Mammary epithelial cell (primary cell): ENCODE measurements at regions of chr9 and their contacts with region 1.

Region 1: DNA sequence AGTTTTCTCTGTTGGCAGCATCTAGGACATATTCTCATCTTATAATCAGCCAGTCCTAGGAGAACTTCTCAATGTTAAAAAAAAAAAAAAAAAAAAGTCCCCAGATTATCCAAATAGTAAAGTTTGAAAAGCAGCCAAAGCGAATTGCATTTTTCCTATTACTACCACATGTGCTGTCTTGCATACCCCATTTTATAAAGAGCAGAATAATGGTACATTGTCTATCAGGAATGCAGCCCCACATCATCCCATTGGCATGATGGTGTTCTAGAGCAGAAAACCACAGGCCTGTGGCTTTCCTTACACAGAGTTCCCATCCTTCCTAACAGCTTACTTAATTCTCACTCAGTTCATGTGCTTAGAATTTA is 381.6 kb downstream of the TMEM38B start:
- DNase-seq: peak; percentile 96
- H3K4me3 ChIP-seq: peak overlapping the region in 1 of 3 experiments; percentile 18
- H3K27ac ChIP-seq: peak overlapping the region; percentile 90
- H3K4me1 ChIP-seq: peaks cover 50% of the 10 kb centered on the region
- H3K27me3 ChIP-seq: no peaks in the 10 kb centered on the region
- CTCF ChIP-seq: no peak

Region 2: GRCh38 chr9:106111045-106111717 is 35.2 kb after region 1 on chr9:
- CTCF ChIA-PET with region 1: interaction called, 4 read pairs
- dilution Hi-C with region 1: no loop called
- in situ Hi-C with region 1: no loop called
- intact Hi-C with region 1: loop called (anchors 2 kb)
- DNase-seq: no peak
- H3K4me3 ChIP-seq: no peak overlapping the region
- H3K27ac ChIP-seq: peak overlapping the region; percentile 95
- H3K4me1 ChIP-seq: peaks cover 37% of the 10 kb centered on the region
- H3K27me3 ChIP-seq: no peaks in the 10 kb centered on the region
- CTCF ChIP-seq: no peak

Region 3: GRCh38 chr9:106560540-106560939 is 484.6 kb after region 1 on chr9:
- CTCF ChIA-PET with region 1: no interaction called
- dilution Hi-C with region 1: no loop called
- in situ Hi-C with region 1: no loop called
- intact Hi-C with region 1: no loop called
- DNase-seq: no peak
- H3K4me3 ChIP-seq: no peak overlapping the region
- H3K27ac ChIP-seq: no peak overlapping the region
- H3K4me1 ChIP-seq: no peaks in the 10 kb centered on the region
- H3K27me3 ChIP-seq: no peaks in the 10 kb centered on the region
- CTCF ChIP-seq: peak; percentile 13 to 29